CD4-positive, alpha-beta memory T cell (primary cell): ENCODE measurements at regions of chr2 and their contacts with region 1.

Region 1: GRCh38 chr2:168961450-168962229 is 60.5 kb downstream of the G6PC2 start:
- DNase-seq: peak; percentile 32 to 67 (median 57)
- H3K4me3 ChIP-seq: no peak overlapping the region
- H3K4me3 Mint-ChIP-seq: no peak overlapping the region
- H3K27ac ChIP-seq: no peak overlapping the region
- H3K27ac Mint-ChIP-seq: peak overlapping the region in 1 of 7 donors; percentile 43
- H3K4me1 ChIP-seq: peaks cover 29% of the 10 kb centered on the region
- H3K4me1 Mint-ChIP-seq: peaks cover 28 to 34% (median 31%) of the 10 kb centered on the region in 4 donors
- H3K27me3 ChIP-seq: no peaks in the 10 kb centered on the region
- H3K27me3 Mint-ChIP-seq: peaks cover 2 to 6% of the 10 kb centered on the region in 2 donors

Region 2: DNA sequence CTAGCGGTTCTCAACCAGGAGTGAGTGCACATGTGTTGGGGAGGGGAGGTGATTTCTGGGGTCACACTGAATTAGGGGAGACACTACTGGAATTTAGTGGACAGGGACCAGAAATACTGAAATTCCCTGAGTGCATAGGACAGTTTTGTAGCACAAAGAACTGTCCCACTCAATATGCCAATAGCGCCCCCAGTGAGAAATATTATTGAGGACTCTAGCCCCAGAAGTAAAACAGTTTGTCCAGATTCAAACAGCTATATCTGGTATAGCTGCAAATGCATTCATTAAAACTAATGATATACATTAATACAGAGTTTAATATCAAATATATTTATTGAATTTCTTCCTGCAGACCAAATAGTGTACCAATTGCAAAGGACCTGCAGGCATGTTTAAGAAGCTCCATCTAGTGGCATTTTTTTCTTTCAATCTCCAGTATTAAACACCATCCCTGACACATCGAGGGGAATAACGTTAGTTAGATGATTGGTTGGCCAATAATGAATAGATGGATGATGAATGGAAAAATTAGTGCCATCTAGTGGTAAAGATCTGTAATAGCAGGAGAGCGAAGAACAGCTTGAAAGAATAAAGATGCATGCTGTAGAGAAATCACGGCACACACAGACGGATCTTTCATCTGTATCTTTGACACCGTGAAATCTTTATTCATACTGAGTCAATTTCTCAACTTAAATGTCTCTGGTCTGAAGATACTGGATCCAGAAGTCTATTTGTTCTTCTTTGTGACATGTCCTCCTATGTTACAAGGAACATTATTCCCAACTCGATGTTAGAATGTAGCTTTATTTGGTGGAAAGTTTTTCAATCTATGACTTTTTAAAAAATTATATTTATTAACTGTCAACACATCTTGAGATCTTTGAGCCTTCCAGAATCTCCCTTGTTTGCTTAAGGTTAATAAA is 170.2 kb after region 1 on chr2:
- CTCF ChIA-PET with region 1: interaction called, 117 read pairs
- POLR2A ChIA-PET with region 1: interaction called, 5 read pairs
- intact Hi-C with region 1: loop called (anchors 1 kb)
- DNase-seq: peak in 4 of 5 donors; percentile 52 to 58 (median 54)
- H3K4me3 ChIP-seq: no peak overlapping the region
- H3K4me3 Mint-ChIP-seq: no peak overlapping the region
- H3K27ac ChIP-seq: no peak overlapping the region
- H3K27ac Mint-ChIP-seq: peak overlapping the region in 3 of 7 donors; percentile 1 to 32 (median 18)
- H3K4me1 ChIP-seq: no peaks in the 10 kb centered on the region
- H3K4me1 Mint-ChIP-seq: peaks cover 0 to 6% (median 3%) of the 10 kb centered on the region in 4 donors
- H3K27me3 ChIP-seq: no peaks in the 10 kb centered on the region
- H3K27me3 Mint-ChIP-seq: no peaks in the 10 kb centered on the region

Region 3: DNA sequence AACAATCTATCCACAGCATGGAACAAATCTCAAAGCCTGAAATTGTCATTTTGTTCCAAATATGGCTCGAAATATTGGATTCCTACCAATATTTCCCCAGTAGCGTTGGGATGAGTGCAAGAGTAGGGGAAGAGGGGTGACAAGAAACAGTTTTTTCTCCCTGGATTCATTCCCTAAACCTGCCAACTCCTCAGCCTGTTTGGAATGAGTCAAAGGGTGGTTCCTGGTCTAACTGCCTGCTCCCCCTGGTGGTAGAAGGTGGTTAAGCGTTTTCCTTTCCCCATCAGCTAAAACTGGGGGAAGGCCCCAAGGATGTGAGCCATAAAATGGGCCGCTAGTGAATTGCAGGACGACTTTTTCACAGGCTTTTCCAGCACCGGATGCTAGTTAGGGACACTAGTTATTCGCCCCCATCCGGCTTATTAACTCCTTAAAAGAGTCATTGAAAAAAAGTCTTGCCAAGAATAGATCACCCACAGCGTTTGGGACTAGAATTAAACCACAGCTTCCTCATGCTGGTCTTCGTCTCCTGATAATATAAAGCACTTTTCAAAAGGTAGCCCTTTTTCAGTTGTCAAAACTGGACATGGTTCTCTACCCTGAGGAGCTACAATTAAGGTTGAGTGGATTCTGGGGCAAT is 180.2 kb after region 1 on chr2:
- CTCF ChIA-PET with region 1: interaction called, 188 read pairs
- POLR2A ChIA-PET with region 1: interaction called, 4 read pairs
- intact Hi-C with region 1: loop called (anchors 1 kb)
- DNase-seq: peak; percentile 41 to 63 (median 54)
- H3K4me3 ChIP-seq: no peak overlapping the region
- H3K4me3 Mint-ChIP-seq: no peak overlapping the region
- H3K27ac ChIP-seq: no peak overlapping the region
- H3K27ac Mint-ChIP-seq: no peak overlapping the region
- H3K4me1 ChIP-seq: no peaks in the 10 kb centered on the region
- H3K4me1 Mint-ChIP-seq: peaks cover 0 to 3% (median 0%) of the 10 kb centered on the region in 4 donors
- H3K27me3 ChIP-seq: no peaks in the 10 kb centered on the region
- H3K27me3 Mint-ChIP-seq: no peaks in the 10 kb centered on the region

Region 4: DNA sequence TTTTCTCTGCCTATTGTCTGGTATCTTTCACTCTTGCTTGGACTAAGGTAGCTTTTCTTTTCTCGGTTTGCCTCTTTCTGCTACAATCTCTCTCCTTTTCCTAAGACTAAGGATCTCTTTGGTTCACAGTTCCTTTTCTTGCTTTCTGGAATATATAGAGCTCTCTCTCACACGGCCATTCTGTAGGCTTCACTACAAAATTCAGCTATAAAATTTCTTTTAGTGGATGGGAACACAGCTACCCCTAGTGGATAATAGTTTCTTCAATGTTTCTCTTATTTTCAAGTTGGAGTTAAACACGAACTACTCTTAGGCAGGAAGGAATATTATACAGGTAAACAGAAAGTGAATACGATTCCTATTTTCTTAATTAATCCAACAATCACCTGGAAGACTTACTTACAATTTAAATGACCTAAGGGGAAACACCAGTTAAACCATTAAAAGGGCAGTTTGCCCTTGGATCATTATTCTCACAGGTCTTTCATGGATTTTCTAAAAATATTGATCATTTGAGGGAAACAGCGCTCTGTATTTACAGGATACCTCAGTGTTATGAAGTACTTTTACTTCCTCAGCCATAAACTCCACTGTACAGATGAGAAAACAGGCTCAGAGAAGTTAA is 260.2 kb after region 1 on chr2:
- CTCF ChIA-PET with region 1: no interaction called
- POLR2A ChIA-PET with region 1: no interaction called
- intact Hi-C with region 1: loop called (anchors 5 kb)
- DNase-seq: peak in 1 of 5 donors; percentile 15
- H3K4me3 ChIP-seq: no peak overlapping the region
- H3K4me3 Mint-ChIP-seq: no peak overlapping the region
- H3K27ac ChIP-seq: no peak overlapping the region
- H3K27ac Mint-ChIP-seq: no peak overlapping the region
- H3K4me1 ChIP-seq: no peaks in the 10 kb centered on the region
- H3K4me1 Mint-ChIP-seq: peaks cover 0 to 4% (median 0%) of the 10 kb centered on the region in 4 donors
- H3K27me3 ChIP-seq: no peaks in the 10 kb centered on the region
- H3K27me3 Mint-ChIP-seq: peaks cover 0 to 1% of the 10 kb centered on the region in 2 donors

Region 5: DNA sequence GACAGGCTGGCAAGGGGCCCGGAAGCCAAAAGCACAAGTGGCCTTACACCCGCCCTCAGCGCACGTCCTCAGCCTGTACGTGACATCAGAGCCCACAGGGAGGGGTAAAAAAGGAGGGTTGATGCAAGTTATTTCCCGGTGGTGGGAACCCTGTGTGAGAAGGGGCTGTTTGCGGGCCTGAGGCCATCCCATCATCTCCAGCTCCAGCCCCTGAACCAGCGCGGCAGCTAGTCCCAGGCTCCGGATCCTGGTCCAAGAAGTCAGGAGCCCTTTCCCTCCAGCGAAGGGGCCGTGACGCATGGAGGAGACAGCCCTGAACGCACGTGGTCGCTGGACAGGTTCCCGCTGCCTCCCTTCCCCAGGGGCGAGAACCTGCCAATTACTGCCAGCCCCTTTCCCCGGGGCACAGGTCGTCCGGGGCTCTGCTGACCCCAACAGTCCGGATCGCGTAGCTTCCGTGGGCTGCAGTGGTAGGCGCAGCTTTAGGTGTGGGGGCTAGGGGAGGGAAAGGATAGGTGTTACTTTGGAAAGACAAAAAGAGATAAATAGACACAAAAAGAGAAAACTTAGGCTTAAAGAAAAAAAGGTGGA is 402.0 kb after region 1 on chr2:
- CTCF ChIA-PET with region 1: no interaction called
- POLR2A ChIA-PET with region 1: no interaction called
- intact Hi-C with region 1: loop called (anchors 5 kb)
- DNase-seq: peak in 3 of 5 donors; percentile 44 to 75 (median 51)
- H3K4me3 ChIP-seq: peak overlapping the region; percentile 78 to 92
- H3K4me3 Mint-ChIP-seq: peak overlapping the region; percentile 89 to 97 (median 95)
- H3K27ac ChIP-seq: no peak overlapping the region
- H3K27ac Mint-ChIP-seq: peak overlapping the region in 6 of 7 donors; percentile 32 to 89 (median 64)
- H3K4me1 ChIP-seq: peaks cover 16% of the 10 kb centered on the region
- H3K4me1 Mint-ChIP-seq: peaks cover 16 to 41% (median 21%) of the 10 kb centered on the region in 4 donors
- H3K27me3 ChIP-seq: peaks cover 6% of the 10 kb centered on the region
- H3K27me3 Mint-ChIP-seq: peaks cover 22 to 23% of the 10 kb centered on the region in 2 donors

Region 6: DNA sequence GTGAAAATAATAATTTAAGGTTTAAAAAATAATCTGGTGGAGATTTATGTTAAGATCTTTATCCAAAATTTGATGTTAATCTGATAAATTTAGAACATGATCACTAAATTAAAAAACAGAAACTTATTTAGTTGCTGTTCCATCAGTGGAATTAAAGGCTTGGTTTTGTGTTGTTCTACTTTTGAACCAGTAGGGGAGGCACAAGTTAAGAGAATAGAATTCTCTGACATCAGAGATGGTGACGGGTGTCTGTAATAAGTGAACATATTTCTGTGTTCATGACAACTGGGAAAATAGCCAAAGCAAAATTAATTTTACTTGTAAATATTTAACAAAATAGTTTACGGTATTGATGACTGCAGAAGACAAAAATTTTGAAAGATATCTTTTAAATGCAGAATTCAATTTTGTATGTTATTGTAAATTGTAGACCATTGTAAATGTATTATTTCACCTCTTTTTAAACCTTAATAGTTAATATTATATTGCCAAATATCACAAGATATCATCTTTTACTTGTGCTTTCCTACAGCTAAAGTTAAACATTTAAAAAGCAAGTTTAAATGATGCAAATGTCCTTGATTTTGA is 971.6 kb after region 1 on chr2:
- CTCF ChIA-PET with region 1: no interaction called
- POLR2A ChIA-PET with region 1: no interaction called
- intact Hi-C with region 1: loop called (anchors 5 kb)
- DNase-seq: peak in 1 of 5 donors; percentile 6
- H3K4me3 ChIP-seq: no peak overlapping the region
- H3K4me3 Mint-ChIP-seq: no peak overlapping the region
- H3K27ac ChIP-seq: no peak overlapping the region
- H3K27ac Mint-ChIP-seq: no peak overlapping the region
- H3K4me1 ChIP-seq: no peaks in the 10 kb centered on the region
- H3K4me1 Mint-ChIP-seq: peaks cover 0 to 4% (median 0%) of the 10 kb centered on the region in 4 donors
- H3K27me3 ChIP-seq: no peaks in the 10 kb centered on the region
- H3K27me3 Mint-ChIP-seq: no peaks in the 10 kb centered on the region